ENCODE measurements at regions of chr9 and their contacts with region 1.

Region 1: DNA sequence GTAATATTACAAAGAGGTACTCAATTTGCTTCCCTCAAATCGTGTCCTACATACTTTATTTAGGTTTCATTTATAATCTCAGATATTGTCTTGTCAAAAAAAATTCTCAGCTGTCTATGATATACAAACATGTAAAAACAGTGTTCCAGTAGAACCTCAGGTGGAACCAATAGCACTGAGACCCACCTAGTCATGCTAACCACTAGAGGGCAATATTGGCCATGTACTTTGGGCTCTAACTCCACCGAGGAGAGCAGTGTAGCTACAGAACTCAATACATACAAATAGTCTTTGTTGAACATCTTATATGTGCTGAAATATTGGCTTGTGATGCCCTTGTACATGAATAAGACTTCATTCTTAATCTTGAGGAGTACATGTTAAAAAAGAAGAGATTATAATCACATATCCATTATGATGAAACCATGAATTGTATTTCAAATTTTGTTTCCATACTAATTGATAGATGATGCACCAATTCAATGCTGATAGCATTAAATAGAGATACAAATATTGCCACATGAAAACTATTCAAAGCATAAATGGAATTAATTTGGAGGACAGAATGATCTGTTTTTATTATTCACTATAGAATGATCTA is 71.2 kb upstream of the CNTLN start:
- DNase-seq: no peak
- ATAC-seq: peak in 3 of 8 donors; percentile 55 to 72 (median 67)
- H3K4me3 ChIP-seq: no peak overlapping the region
- H3K27ac ChIP-seq: no peak overlapping the region
- H3K4me1 ChIP-seq: no peaks in the 10 kb centered on the region
- H3K27me3 ChIP-seq: no peaks in the 10 kb centered on the region
- CTCF ChIP-seq: peak; percentile 7 to 77 (median 69)

Region 2: DNA sequence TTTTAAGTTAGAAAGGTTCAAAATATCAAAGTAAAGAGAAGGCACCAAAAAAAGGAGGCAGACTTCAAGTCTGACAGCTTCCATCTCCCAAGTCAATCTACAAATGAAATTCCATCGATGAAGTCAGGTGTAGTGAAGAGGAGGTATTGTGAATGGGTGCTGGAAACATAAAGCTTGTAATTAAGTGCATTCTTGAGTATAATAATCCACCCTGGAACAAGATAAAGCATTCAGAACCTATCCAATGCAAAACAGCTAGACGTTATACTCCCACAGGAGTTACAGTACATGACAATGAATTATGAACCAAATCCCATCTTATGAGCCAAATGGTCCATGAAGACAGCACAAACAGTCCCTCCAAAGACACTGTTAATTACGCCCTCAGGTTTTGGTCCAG is 215.5 kb before region 1 on chr9:
- intact Hi-C with region 1: loop called in 1 of 10 experiments (anchors 10 kb)
- DNase-seq: no peak
- ATAC-seq: no peak
- H3K4me3 ChIP-seq: no peak overlapping the region
- H3K27ac ChIP-seq: no peak overlapping the region
- H3K4me1 ChIP-seq: no peaks in the 10 kb centered on the region
- H3K27me3 ChIP-seq: peaks cover 0 to 6% (median 0%) of the 10 kb centered on the region in 7 donors
- CTCF ChIP-seq: no peak